Activated T-helper 1 cell treated with anti-CD3 and anti-CD28 coated beads, Interleukin-12 subunit alpha, Interleukin-12 subunit beta, Interleukin-2, Interleukin-4 antibody, amounts not matched to agents 30 ng/mL and 10 ng/mL and 1 ng/mL, durations not matched to agents 14 hours and 24 hours and 36 hours (primary cell): ENCODE measurements at regions of chr1 and their contacts with region 1.

Region 1: GRCh38 chr1:19715334-19716203 is 50.9 kb downstream of the HTR6 start:
- DNase-seq: peak; percentile 75
- H3K4me3 Mint-ChIP-seq: no peak overlapping the region
- H3K27ac Mint-ChIP-seq: no peak overlapping the region
- H3K4me1 Mint-ChIP-seq: peaks cover 17% of the 10 kb centered on the region
- H3K27me3 Mint-ChIP-seq: no peaks in the 10 kb centered on the region

Region 2: GRCh38 chr1:19704247-19705113 is 11.1 kb before region 1 on chr1:
- intact Hi-C with region 1: no loop called
- DNase-seq: no peak
- H3K4me3 Mint-ChIP-seq: no peak overlapping the region
- H3K27ac Mint-ChIP-seq: no peak overlapping the region
- H3K4me1 Mint-ChIP-seq: no peaks in the 10 kb centered on the region
- H3K27me3 Mint-ChIP-seq: no peaks in the 10 kb centered on the region

Region 3: GRCh38 chr1:19799877-19800804 is 84.6 kb after region 1 on chr1 and contains the start of gene TMCO4:
- intact Hi-C with region 1: loop called (anchors 1 kb)
- DNase-seq: peak; percentile 34
- H3K4me3 Mint-ChIP-seq: peak within 1 kb of the TSS; percentile 86
- H3K27ac Mint-ChIP-seq: peak within 1 kb of the TSS; percentile 91
- H3K4me1 Mint-ChIP-seq: peaks cover 28% of the 10 kb centered on the region
- H3K27me3 Mint-ChIP-seq: peaks cover 15% of the 10 kb centered on the region
- total RNA-seq, gene TMCO4: 14.0 and 15.1 TPM in 2 replicates

Region 4: DNA sequence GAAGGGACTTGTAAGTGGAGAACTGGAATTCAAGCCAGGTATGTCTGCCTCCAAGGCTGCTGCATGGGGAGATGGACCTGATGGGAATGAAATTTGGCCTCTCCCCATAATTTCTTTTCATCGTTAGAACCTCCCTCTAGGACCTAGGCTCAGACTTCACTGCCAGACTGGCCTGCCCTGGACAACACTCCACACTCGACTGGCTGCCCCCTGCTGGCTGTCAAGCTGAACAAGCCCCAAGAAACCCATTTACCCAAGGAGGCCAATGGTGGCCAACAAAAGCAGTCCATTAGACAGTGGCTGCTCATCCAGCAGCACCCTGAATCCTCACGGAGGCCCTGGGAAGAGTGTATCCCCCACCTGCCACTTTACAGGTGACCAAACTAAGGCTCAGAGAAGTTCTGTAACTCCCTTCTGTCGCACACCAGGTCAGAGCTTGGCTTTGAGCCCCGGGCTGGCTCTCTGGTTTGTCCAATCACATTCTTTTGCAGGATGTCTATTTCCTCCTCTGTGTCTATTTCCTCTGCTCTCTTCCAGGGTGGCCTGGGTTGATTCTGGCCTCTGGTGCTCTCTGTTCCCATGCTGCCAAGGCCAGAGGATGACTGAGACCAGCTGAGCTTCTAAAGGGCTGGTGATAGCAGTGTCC is 95.8 kb after region 1 on chr1:
- intact Hi-C with region 1: loop called (anchors 1 kb)
- DNase-seq: peak; percentile 13
- H3K4me3 Mint-ChIP-seq: no peak overlapping the region
- H3K27ac Mint-ChIP-seq: no peak overlapping the region
- H3K4me1 Mint-ChIP-seq: no peaks in the 10 kb centered on the region
- H3K27me3 Mint-ChIP-seq: peaks cover 2% of the 10 kb centered on the region